Lower lobe of right lung (tissue), 2 donors: ENCODE measurements at regions of chr7 and their contacts with region 1.

Region 1: DNA sequence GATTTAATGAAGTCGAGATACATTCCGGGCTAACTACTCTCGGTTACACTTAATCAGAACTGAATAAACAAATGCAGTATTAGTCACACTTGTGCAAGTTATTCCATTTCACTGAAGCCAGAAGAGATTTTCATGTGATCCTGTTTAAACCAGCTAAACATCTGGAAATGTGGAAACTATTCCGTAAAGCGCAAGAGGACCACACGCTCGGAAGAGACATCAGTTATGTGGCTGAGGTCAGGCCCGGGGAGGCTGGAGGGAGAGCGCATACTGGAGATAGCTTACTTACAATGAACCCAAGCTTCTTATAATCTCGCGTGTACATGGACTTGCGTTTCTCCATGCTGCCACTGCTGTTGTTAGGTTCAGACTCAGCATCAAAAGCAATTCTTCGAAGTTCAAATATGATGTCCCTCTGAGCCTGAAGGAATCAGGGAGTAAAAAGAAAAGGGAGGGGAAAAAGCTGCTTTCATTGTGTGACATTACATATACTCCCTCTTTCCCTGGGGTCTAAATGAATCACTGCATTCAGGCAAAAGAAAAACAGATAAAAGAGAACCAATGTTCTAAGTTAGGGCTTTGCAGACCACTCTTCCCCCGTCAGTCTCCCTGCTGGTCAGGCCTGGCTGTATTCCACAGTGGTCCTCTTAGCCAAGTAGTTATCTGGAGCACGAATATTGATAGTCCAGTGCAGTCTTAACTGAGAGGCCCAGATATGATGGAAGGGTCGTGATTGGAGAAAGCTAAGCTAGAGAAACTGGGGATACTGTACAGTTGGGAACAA is 237.4 kb downstream of the ELMO1 start:
- DNase-seq: no peak
- ATAC-seq: peak; percentile 57 to 58
- H3K4me3 ChIP-seq: no peak overlapping the region
- H3K27ac ChIP-seq: peak overlapping the region; percentile 38
- H3K4me1 ChIP-seq: peaks cover 42% of the 10 kb centered on the region
- H3K27me3 ChIP-seq: no peaks in the 10 kb centered on the region
- CTCF ChIP-seq: no peak

Region 2: DNA sequence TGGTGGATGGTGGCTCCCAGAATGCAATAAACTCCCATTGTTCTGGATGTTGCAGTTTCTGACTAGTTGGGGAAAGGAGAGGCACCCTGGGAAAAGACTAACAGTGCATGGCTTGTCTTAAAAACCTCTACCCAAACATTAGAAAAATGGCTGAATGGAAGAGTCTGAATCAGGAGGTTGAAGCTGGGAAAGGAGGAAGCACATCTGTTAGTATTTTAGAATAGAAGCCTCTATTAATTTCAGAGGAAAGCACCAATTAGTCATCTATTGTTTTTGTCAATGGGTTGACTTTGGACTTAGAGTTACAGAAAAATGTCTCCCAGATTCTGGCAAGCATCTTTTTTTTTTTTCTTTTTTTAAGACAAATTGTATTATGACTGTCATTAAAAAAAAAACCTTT is 293.5 kb after region 1 on chr7:
- intact Hi-C with region 1: loop called (anchors 10 kb)
- DNase-seq: no peak
- ATAC-seq: no peak
- H3K4me3 ChIP-seq: no peak overlapping the region
- H3K27ac ChIP-seq: no peak overlapping the region
- H3K4me1 ChIP-seq: no peaks in the 10 kb centered on the region
- H3K27me3 ChIP-seq: no peaks in the 10 kb centered on the region
- CTCF ChIP-seq: no peak